MCF 10A (cell line): ENCODE measurements at regions of chr15 and their contacts with region 1.

Region 1: DNA sequence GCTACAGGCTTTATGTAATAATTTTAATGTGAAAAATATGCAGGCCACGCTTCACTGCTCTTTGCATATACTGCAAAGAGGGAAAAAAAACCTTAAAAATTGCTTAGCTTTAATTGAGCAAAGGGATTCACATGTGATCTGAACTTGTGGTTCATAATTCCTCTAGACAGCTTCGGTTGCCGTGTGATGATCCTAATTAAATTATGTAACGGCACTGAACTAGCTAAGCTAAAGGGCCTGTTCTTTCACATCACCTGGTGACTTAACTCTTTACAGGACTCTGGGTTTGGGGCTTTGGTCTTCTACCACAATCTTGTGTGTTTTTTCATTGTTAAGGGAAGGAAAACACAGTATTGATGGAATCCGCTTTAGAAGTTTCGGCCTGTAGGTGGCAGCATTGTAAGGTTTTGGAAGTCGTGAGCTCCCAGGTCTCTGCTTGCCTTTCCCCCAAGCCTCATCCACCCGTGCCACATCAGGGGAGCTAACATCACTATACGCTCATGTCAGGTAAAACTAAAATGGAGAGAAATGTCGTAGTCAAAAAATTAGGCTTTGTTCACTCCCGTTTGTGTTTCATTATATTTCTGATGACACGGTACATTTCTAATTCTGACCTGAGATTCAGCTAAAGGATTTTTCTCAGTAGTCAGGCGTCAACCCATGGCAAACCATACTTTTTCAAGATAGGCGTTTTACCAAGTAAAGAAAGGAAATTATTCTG is 205.6 kb upstream of the DPH6 start:
- DNase-seq: peak; percentile 80
- H3K4me3 Mint-ChIP-seq: no peak overlapping the region
- H3K27ac Mint-ChIP-seq: no peak overlapping the region
- H3K4me1 Mint-ChIP-seq: no peaks in the 10 kb centered on the region
- H3K27me3 Mint-ChIP-seq: no peaks in the 10 kb centered on the region
- CTCF ChIP-seq: peak; percentile 68

Region 2: DNA sequence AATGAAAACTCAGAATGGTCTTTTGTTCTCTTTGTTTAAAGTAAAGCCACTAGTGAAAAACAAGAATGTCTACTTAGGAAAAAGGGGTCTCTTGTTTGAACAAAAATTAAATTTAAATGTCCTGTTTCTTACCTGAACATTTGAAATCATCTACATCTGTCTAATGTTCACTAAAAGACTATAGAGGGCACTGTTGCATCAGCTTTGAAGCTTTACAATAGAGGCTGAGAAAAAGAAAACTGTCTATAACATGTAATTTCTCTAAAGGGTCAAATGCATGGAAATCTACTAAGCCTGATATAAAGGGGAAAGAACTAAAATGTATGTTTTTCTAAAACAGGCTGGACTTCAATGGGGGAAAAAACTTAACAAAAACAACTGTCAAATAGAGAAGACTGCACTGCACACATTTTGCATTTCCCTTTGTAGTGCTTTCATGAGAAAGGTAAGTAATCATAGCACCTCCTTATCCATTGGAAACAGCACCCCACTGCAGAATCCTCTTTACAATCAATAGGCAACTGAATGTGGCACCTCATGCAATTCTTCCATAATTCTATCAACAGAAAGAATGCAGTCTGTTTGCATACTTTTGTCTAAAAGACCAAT is 231.9 kb before region 1 on chr15:
- CTCF ChIA-PET with region 1: interaction called, 4 read pairs
- POLR2A ChIA-PET with region 1: no interaction called
- intact Hi-C with region 1: loop called (anchors 1 kb)
- DNase-seq: peak; percentile 64
- H3K4me3 Mint-ChIP-seq: no peak overlapping the region
- H3K27ac Mint-ChIP-seq: no peak overlapping the region
- H3K4me1 Mint-ChIP-seq: peaks cover 6% of the 10 kb centered on the region
- H3K27me3 Mint-ChIP-seq: no peaks in the 10 kb centered on the region
- CTCF ChIP-seq: peak; percentile 53

Region 3: DNA sequence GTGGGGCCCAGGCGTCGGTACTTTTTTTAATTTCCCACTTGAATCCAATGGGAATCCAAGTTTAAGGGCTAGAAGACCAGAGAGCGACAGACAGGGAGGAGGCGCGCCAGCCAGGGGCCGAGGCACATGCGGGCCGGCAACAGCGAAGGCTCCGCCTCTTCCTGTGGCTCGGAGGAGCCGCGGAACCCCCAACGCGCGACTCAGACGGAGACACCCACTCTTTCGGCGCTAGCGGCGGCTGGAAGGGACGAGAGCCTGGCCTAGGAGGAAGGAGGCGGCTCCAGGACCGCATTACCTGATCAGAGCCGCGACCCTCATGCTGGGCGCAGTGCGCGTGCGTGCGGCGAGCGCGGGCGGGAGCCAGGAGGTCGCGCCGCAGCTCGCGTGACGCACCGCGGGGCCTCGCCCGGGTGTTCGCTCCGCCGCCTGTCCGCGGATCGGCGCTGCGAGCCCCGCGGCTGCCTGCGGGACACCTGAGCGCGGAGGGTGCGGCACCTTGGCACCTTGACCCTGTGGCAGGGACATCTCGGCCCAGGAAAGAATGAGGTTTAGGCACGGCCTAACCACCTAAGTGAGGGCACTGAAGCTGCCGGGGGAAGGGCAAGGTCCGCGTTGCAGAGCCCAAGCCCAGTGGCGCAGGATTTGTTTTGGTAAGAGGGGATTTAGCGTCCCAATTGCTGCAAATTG is 205.6 kb before region 1 on chr15 and contains the start of gene DPH6:
- CTCF ChIA-PET with region 1: interaction called, 4 read pairs
- POLR2A ChIA-PET with region 1: no interaction called
- intact Hi-C with region 1: loop called (anchors 5 kb)
- DNase-seq: peak; percentile 79
- H3K4me3 Mint-ChIP-seq: peak within 1 kb of the TSS; percentile 88
- H3K27ac Mint-ChIP-seq: peak within 1 kb of the TSS; percentile 98
- H3K4me1 Mint-ChIP-seq: peaks cover 22% of the 10 kb centered on the region
- H3K27me3 Mint-ChIP-seq: no peaks in the 10 kb centered on the region
- CTCF ChIP-seq: no peak
- total RNA-seq, gene DPH6: 20.3 and 21.4 TPM in 2 replicates

Region 4: DNA sequence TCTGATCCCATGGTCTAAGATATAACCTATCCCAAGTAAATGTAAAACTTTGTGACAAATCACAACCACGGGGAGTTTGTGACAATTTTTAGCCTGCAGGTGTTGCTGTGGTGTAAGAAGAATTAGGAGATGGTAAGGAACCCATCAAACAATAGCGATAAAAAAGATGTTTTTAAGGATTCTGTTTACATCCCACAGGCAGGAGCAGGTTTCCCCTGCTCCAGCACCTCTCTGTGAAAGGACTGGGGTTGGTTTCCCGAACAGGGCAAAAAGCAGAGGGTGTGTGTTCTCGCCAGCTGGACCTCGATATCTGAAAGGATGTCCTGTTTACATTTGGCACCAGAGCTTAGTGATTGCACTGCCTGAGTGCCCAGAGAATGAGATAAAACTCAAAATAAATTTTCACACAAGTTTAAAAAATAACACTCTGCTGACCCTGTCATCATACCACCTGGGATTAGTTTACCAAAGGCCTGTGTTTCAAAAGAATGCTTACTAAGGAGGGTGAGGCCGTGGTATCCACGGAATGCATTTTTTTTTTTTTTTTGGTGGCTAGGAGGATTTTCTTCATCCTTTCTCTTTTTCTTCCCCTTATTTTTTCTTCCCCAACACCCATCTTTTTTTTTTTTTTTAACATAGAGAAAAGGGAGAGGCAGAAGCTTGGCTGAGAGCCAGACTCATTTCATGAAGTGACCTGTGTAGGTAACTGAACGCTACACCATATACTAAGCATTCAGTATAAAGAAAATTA is 53.8 kb before region 1 on chr15:
- CTCF ChIA-PET with region 1: interaction called, 13 read pairs
- POLR2A ChIA-PET with region 1: no interaction called
- intact Hi-C with region 1: no loop called
- DNase-seq: peak; percentile 25
- H3K4me3 Mint-ChIP-seq: peak overlapping the region; percentile 32
- H3K27ac Mint-ChIP-seq: peak overlapping the region; percentile 40
- H3K4me1 Mint-ChIP-seq: peaks cover 33% of the 10 kb centered on the region
- H3K27me3 Mint-ChIP-seq: no peaks in the 10 kb centered on the region
- CTCF ChIP-seq: no peak

Region 5: DNA sequence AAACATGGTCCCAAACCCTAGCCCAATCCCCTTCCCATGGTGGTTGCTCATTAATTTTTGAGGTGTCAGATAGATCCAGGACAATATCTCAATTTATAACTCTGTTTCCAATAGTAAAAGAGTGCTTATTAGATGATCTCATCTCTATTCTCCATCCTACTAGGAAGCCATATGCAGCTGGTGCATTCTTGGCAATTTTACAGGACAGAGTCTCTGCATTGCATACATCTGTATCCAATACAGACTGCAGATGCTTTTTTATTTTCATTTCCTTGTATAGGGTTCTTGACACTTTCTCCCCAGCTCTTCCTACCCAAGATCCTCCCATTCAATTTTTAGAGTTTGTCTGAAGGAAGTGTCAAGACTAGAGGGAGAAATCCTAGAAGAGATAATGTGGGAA is 10.8 kb before region 1 on chr15:
- CTCF ChIA-PET with region 1: interaction called, 29 read pairs
- POLR2A ChIA-PET with region 1: interaction called, 6 read pairs
- intact Hi-C with region 1: no loop called
- DNase-seq: no peak
- H3K4me3 Mint-ChIP-seq: no peak overlapping the region
- H3K27ac Mint-ChIP-seq: no peak overlapping the region
- H3K4me1 Mint-ChIP-seq: peaks cover 7% of the 10 kb centered on the region
- H3K27me3 Mint-ChIP-seq: no peaks in the 10 kb centered on the region
- CTCF ChIP-seq: no peak

Region 6: DNA sequence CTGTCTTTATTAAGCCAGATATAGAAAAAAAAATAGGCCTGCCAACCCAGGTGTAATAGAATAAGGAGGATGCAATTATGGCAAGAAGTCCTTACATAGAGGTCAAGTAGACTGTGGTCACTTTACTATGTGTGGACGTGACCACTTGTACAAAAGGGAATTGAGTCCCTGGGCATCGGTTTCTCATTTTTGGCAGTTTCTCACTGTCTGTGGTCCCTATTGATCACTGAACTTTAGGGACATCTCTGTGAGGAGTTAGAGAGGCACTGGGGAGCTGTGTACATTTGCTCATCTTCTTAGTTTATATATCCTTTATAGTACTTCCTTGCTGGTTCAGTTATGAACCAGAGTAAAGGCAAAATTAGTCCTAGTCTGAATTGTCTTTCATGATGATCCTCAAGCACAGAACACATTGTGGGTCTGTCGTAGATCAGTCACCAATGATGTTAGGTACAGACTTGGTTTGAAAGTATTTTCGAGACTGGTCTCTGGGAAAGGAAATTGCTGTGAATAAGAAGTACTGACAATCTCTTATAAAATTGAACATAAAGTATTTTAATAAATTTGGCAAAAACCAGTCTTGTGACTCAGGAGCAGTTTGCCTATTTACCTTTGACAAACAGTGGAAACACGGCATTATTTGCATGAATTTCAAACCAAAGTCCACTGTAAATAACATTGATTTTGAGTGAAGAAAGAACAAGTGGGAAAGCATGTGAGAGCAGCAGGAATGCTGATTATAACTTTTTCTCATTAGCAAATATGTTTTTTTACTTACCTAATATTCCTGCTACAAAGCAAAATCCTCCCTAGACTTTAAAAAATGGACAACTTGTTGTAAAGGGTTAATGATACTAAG is 13.3 kb after region 1 on chr15:
- CTCF ChIA-PET with region 1: interaction called, 39 read pairs
- POLR2A ChIA-PET with region 1: no interaction called
- intact Hi-C with region 1: no loop called
- DNase-seq: no peak
- H3K4me3 Mint-ChIP-seq: no peak overlapping the region
- H3K27ac Mint-ChIP-seq: no peak overlapping the region
- H3K4me1 Mint-ChIP-seq: no peaks in the 10 kb centered on the region
- H3K27me3 Mint-ChIP-seq: no peaks in the 10 kb centered on the region
- CTCF ChIP-seq: no peak

Region 7: DNA sequence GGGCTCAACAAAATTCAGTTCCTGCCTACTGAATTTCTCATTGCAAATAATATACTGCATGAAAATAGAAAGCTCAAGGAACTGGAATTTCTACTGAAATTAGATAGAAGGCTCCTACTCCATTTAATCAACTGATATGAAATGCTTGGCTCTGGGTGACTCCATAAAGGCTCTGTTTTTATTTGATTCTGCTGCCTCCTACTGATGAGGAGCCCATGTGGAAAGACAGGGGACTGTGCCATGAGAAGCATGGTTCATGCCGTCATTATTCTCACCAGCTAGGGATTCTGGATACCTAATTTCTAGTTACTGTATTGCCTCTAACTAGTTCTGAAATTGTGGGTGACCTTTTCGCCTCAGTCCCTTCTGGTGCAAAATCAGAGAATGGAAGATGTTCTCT is 160.6 kb after region 1 on chr15:
- CTCF ChIA-PET with region 1: interaction called, 8 read pairs
- POLR2A ChIA-PET with region 1: no interaction called
- intact Hi-C with region 1: loop called (anchors 1 kb)
- DNase-seq: peak; percentile 28
- H3K4me3 Mint-ChIP-seq: no peak overlapping the region
- H3K27ac Mint-ChIP-seq: no peak overlapping the region
- H3K4me1 Mint-ChIP-seq: no peaks in the 10 kb centered on the region
- H3K27me3 Mint-ChIP-seq: no peaks in the 10 kb centered on the region
- CTCF ChIP-seq: peak; percentile 31